ENCODE measurements at regions of chr17 and their contacts with region 1.

Region 1: DNA sequence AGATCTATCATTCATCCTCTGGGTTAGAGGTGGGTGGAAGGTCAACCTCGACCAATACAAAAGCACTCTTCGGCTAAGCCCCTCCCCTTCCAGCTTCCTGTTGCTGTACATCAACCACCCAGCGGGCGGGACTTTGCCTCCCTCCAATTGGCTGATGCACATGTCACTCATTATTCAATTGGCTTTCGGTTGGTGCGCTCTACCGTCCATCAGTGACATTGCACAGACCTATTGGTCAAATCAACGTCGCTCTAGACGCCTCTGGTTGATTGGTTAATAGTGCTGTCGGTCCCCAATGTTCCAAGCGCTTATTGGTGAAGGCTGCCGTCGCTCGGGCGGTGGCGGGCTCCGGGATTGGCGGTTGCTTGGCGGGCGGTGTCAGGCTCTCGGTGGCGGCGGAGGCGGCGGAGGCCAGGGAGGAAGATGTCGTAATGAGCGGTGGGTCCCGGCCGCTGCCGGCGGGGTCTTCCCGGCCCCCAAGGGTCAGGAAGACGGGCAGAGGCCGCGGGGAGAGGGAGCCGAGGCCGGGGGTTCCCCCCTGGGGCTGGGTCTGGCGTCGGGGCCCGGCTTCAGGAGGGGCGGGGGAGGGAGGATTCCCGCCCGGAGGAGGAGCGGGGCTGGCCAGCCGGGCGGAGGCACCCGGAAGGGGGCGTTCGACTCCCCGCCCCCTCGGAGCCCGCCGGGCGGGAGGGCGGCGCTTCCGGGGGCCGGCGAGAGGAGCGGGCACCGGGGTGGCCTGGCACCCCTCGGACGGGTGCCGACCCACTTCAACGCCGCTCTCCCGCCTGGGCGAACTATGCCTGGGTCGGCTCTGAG is at the start of gene SP2:
- DNase-seq: peak; percentile 100
- ATAC-seq: peak; percentile 85
- H3K4me3 ChIP-seq: peak within 1 kb of the TSS; percentile 73 to 97 (median 90)
- H3K4me3 Mint-ChIP-seq: peak within 1 kb of the TSS; percentile 96
- H3K27ac ChIP-seq: peak within 1 kb of the TSS; percentile 94 to 98
- H3K27ac Mint-ChIP-seq: peak within 1 kb of the TSS; percentile 100
- H3K4me1 ChIP-seq: peaks cover 19 to 23% of the 10 kb centered on the region in 2 donors
- H3K4me1 Mint-ChIP-seq: peaks cover 50% of the 10 kb centered on the region
- H3K27me3 ChIP-seq: no peaks in the 10 kb centered on the region
- H3K27me3 Mint-ChIP-seq: no peaks in the 10 kb centered on the region
- CTCF ChIP-seq: no peak
- total RNA-seq, gene SP2: 32.5 and 35.4 TPM in 2 replicates

Region 2: GRCh38 chr17:47649153-47649971 is 246.7 kb before region 1 on chr17 and contains the start of gene KPNB1:
- CTCF ChIA-PET with region 1: no interaction called
- POLR2A ChIA-PET with region 1: interaction called, 14 read pairs
- intact Hi-C with region 1: loop called (anchors 1 kb)
- DNase-seq: peak; percentile 99
- ATAC-seq: peak; percentile 79
- H3K4me3 ChIP-seq: peak within 1 kb of the TSS; percentile 76 to 93 (median 83)
- H3K4me3 Mint-ChIP-seq: peak within 1 kb of the TSS; percentile 98
- H3K27ac ChIP-seq: peak within 1 kb of the TSS; percentile 76 to 84
- H3K27ac Mint-ChIP-seq: peak within 1 kb of the TSS; percentile 98
- H3K4me1 ChIP-seq: peaks cover 32% of the 10 kb centered on the region in 2 donors
- H3K4me1 Mint-ChIP-seq: peaks cover 44% of the 10 kb centered on the region
- H3K27me3 ChIP-seq: no peaks in the 10 kb centered on the region
- H3K27me3 Mint-ChIP-seq: no peaks in the 10 kb centered on the region
- CTCF ChIP-seq: no peak
- total RNA-seq, gene KPNB1: 269 and 278 TPM in 2 replicates

Region 3: DNA sequence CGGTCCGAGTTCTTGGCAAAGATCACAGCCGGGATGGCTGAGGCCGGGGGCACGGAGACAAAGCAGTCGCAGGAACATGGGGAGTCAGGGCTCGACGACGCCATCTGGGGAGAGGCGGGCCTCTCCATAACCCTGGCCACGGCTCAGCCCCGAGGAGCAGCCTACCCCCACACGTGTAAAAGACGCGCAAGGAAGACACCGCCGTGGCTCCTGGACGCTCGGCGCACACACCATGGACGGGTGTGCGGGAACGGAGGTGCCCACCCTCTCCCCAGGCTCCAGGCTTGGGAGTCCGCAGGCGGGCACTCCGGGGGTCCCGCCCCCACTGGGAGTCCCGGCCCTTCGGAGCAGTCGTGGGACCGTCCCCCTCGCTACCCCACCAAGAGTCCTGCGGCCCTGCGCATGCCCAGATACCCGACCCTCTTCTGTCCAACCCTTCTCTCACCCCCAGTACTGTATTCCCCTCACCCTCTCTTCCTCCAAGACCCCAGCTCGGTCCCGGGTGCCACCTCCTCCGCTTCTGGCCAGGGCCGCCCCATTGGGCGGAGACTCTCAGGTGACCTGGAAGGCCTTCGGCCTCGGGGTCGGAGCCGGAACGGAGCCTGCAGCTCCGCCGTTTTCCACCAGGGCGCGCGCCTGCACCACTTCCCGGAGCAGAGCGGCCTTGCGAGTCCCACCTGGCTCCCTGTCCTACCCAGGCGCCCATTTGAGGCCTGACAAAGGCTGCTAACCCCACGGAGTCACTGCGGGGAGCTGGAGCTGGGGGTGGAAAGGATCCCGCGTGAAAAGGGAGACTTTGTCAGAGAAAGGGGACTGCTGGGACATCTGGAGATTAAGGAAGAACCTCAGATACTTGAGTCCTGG is 55.1 kb before region 1 on chr17 and contains the start of gene SCRN2:
- CTCF ChIA-PET with region 1: interaction called, 436 read pairs
- POLR2A ChIA-PET with region 1: interaction called, 14 read pairs
- intact Hi-C with region 1: loop called (anchors 1 kb)
- DNase-seq: peak; percentile 90
- ATAC-seq: peak; percentile 94
- H3K4me3 ChIP-seq: peak within 1 kb of the TSS; percentile 58 to 87 (median 79)
- H3K4me3 Mint-ChIP-seq: peak within 1 kb of the TSS; percentile 97
- H3K27ac ChIP-seq: peak within 1 kb of the TSS; percentile 26 to 75
- H3K27ac Mint-ChIP-seq: peak within 1 kb of the TSS; percentile 89
- H3K4me1 ChIP-seq: peaks cover 10 to 18% of the 10 kb centered on the region in 2 donors
- H3K4me1 Mint-ChIP-seq: peaks cover 26% of the 10 kb centered on the region
- H3K27me3 ChIP-seq: peaks cover 0 to 23% (median 12%) of the 10 kb centered on the region in 4 experiments
- H3K27me3 Mint-ChIP-seq: peaks cover 20% of the 10 kb centered on the region
- CTCF ChIP-seq: peak; percentile 94
- total RNA-seq, gene SCRN2: 47.8 and 53.8 TPM in 2 replicates

Region 4: DNA sequence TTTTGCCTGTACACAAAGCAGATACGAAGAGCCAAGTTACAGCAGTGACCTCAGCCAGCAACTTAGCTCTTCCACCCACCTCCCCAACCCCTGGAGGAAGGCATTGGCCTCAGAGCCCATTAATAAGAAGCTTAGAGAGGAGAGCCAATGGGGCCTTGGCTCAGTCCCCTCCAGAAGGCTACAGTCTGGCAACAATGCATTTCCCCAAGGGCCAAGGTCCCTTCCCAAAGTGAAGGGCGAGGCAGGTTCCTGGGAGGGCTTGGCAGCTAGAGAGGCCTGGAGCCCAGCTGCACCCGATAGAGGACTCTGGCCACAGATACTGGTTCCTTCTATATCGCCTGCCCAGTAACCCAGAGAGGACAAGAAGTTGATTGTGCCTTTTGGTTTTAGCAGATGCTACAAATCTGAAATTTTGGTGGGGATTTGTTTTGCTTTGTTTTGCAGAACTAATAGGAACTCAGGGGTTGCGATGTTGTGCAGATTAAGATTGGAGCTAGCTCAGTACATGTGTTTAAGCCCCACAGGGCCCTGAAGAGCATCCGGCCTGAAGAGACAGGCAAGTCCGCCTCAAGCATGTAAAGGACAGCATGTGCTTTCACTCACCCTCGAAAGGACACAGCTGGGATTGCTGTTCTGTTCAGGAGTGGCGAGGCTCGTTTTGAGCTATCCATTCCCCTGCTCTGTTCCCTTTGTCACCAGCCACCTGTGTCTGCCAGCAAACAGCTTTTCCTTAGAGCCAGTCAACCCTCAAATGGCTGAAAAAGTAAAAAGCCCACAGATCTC is 33.3 kb after region 1 on chr17:
- CTCF ChIA-PET with region 1: no interaction called
- POLR2A ChIA-PET with region 1: no interaction called
- intact Hi-C with region 1: no loop called
- DNase-seq: no peak
- ATAC-seq: no peak
- H3K4me3 ChIP-seq: no peak overlapping the region
- H3K4me3 Mint-ChIP-seq: no peak overlapping the region
- H3K27ac ChIP-seq: no peak overlapping the region
- H3K27ac Mint-ChIP-seq: no peak overlapping the region
- H3K4me1 ChIP-seq: no peaks in the 10 kb centered on the region
- H3K4me1 Mint-ChIP-seq: no peaks in the 10 kb centered on the region
- H3K27me3 ChIP-seq: no peaks in the 10 kb centered on the region
- H3K27me3 Mint-ChIP-seq: no peaks in the 10 kb centered on the region
- CTCF ChIP-seq: no peak

Region 5: DNA sequence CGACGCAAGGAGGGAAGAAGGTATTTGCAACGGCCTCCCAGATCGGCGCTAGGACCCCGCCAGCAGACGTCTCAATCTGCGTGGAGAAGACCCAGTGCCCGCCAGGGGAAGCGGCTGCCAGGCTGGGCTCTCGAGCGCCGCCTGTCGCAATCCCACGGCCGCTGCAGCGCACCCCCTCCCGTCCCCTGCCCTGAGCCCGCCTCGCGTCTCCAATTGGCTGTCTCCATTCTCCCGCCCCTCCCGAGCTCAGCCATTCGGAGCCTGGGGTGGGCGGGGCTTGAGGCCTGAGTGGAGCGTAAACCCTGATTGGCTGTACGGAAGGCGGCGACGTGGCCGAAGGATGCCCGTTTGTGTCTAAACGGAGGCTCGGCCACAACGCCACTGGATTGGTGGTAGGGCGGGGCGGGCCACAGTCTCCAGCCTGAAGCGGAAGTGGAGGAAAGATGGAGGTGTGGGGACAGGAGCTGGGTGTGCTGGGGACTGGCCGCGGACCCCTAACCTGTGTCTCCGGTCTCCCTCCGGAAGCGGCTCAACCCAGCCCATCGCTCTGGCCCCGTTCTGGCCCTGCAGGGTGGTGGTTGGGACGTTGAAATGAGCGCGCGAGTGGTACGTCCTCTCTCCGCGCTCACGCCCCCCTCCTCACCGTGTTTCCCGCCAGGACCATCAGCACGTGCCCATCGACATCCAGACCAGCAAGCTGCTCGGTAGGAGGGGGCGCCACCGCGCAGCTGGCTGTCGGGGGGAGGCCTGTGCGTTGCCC is 74.8 kb after region 1 on chr17 and contains the start of gene CDK5RAP3:
- CTCF ChIA-PET with region 1: interaction called, 24 read pairs
- POLR2A ChIA-PET with region 1: interaction called, 18 read pairs
- intact Hi-C with region 1: loop called (anchors 1 kb)
- DNase-seq: peak; percentile 99
- ATAC-seq: peak; percentile 98
- H3K4me3 ChIP-seq: peak within 1 kb of the TSS; percentile 79 to 99 (median 94)
- H3K4me3 Mint-ChIP-seq: peak within 1 kb of the TSS; percentile 98
- H3K27ac ChIP-seq: peak within 1 kb of the TSS; percentile 82 to 83
- H3K27ac Mint-ChIP-seq: peak within 1 kb of the TSS; percentile 95
- H3K4me1 ChIP-seq: peaks cover 19 to 28% of the 10 kb centered on the region in 2 donors
- H3K4me1 Mint-ChIP-seq: peaks cover 26% of the 10 kb centered on the region
- H3K27me3 ChIP-seq: no peaks in the 10 kb centered on the region
- H3K27me3 Mint-ChIP-seq: no peaks in the 10 kb centered on the region
- CTCF ChIP-seq: peak; percentile 95
- total RNA-seq, gene CDK5RAP3: 415 and 417 TPM in 2 replicates

Region 6: DNA sequence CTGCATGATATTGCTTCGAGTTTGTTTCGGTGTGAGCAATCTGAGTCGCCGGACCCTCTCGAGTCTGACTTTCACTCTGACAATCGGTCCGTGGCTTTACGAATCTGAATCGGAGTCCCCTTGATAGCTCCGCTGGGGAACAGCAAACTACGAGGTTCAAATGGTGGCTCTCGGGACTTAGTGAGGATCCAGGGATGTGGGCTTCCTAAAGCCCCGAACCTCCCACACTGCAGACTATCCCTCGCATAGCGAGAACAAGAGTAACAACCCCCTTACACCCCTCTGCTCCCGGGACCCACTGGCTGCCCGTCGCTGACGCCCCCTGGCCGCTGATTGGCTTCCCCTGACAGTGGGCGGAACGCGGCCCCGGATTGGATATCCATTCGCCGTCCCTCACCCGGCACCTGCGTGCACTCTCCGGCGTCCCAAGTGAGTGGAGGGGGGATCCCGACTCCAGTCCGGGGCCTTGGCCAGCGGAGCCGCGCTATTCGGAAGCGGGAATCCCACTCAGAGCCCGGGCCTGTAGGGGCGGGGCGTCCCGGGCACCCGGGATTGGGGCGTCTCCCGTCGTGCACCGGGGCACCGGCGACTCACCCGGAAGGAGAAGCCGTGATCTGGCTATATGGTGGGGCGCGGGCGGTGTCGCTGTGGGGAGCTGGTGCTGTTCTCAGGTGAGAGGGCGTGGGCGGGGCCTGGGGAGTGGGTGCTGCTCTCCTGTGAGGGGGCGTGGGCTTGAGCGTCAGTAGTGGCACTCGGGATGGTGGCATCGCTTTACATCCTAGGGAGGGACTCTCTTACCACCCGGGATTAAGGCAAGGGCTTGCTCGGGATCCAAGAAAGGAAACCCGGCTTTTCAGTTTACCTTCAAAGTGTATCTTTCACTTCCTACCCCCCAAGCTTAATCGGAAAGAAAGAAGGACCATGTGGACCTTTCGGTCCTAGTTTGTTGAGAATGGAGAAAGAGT is 211.4 kb after region 1 on chr17 and contains the start of gene SNX11:
- CTCF ChIA-PET with region 1: no interaction called
- POLR2A ChIA-PET with region 1: interaction called, 4 read pairs
- intact Hi-C with region 1: loop called (anchors 2 kb)
- DNase-seq: peak; percentile 94
- ATAC-seq: peak; percentile 78
- H3K4me3 ChIP-seq: peak within 1 kb of the TSS; percentile 71 to 96 (median 79)
- H3K4me3 Mint-ChIP-seq: peak within 1 kb of the TSS; percentile 91
- H3K27ac ChIP-seq: peak within 1 kb of the TSS; percentile 88 to 94
- H3K27ac Mint-ChIP-seq: peak within 1 kb of the TSS; percentile 97
- H3K4me1 ChIP-seq: peaks cover 46 to 61% of the 10 kb centered on the region in 2 donors
- H3K4me1 Mint-ChIP-seq: peaks cover 58% of the 10 kb centered on the region
- H3K27me3 ChIP-seq: no peaks in the 10 kb centered on the region
- H3K27me3 Mint-ChIP-seq: no peaks in the 10 kb centered on the region
- CTCF ChIP-seq: no peak
- total RNA-seq, gene SNX11: 42.0 and 47.1 TPM in 2 replicates